ENCODE measurements at regions of chr2 and their contacts with region 1.

Region 1: GRCh38 chr2:228657807-228658402 is 476.4 kb upstream of the SPHKAP start:
- DNase-seq: no peak
- H3K4me3 ChIP-seq: no peak overlapping the region
- H3K27ac ChIP-seq: no peak overlapping the region
- H3K4me1 ChIP-seq: no peaks in the 10 kb centered on the region
- H3K27me3 ChIP-seq: no peaks in the 10 kb centered on the region
- CTCF ChIP-seq: peak; percentile 41

Region 2: DNA sequence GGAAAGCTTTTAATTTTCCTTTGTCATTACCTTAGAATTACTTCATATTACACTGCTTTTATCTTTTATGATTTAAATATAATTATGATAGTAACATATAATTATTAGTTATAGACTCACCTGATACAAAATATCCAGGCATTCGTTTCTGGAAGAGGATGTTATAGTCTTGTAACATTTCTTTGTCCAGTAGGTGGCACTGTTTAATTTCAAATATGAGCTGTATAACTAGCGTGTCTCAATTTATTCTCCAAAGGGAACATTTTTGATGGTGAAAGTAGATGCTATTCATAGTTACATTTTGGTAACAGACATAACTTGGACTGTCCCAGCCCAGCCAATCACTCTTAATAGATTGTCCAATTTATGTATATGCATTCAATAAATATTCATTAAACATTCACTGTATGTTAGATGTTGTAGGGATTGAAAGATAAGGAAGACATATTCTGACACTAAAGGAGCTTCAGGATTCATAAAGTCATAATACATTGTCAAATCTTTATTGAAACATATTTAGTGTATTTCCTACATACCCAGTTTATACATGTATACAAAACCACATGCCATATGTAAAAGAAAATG is 767.3 kb before region 1 on chr2:
- intact Hi-C with region 1: loop called (anchors 5 kb)
- DNase-seq: no peak
- H3K4me3 ChIP-seq: no peak overlapping the region
- H3K27ac ChIP-seq: no peak overlapping the region
- H3K4me1 ChIP-seq: no peaks in the 10 kb centered on the region
- H3K27me3 ChIP-seq: no peaks in the 10 kb centered on the region
- CTCF ChIP-seq: peak; percentile 65

Region 3: DNA sequence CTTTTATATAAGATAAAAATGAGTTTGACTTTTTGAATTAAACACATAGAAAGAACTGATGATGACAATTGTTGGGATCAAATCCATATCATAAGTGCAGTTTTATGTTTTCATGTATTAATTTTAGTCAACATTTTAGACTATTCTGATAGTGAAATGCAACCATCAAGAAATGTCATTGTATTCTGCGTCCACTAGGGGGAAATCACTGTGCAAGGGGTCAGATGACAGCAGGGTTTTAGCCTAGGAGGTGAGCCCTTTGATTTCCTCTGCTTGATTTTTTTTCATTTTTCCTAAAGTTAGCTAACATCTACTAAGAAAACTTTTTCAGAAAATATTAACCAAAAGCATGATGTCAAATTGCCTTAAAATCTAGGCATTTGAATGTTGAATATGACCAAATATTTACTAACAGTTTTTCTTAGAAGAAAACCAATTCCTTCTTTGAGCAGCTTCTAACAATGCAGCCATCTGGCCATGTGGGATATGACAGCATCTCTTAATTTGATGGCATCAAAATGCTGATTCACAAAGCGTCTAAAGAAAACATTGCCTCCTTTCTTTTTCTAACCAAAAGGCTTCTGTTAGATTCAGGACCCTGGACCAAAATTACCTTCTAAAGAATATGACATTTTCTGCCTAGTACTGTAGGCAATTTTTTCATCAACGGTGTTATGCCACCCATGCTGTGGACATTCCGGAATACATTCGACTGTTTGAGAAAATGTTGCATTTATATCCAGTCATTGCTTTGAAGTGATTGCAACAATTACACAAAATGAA is 618.0 kb before region 1 on chr2:
- intact Hi-C with region 1: loop called (anchors 5 kb)
- DNase-seq: no peak
- H3K4me3 ChIP-seq: no peak overlapping the region
- H3K27ac ChIP-seq: no peak overlapping the region
- H3K4me1 ChIP-seq: no peaks in the 10 kb centered on the region
- H3K27me3 ChIP-seq: no peaks in the 10 kb centered on the region
- CTCF ChIP-seq: peak; percentile 50

Region 4: DNA sequence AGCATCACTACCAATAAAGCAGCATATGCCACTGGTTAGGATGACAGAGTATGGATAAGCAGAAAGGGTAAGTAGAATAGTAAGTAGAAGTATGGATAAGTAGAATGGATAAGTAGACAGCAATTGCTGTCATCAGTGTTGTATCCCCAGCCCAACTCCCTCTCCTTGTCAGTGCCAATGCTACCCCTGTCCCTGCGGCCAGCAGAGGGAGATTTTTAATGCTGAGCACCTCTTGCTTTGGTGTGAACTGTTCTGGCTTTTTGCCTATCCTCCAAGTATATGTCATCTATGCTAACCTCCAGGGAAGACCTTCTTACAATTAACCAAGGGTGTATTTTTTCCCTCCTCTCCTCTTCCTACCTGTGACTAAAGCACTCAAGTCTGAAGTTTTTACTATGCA is 339.7 kb before region 1 on chr2:
- intact Hi-C with region 1: loop called (anchors 5 kb)
- DNase-seq: peak; percentile 31
- H3K4me3 ChIP-seq: no peak overlapping the region
- H3K27ac ChIP-seq: no peak overlapping the region
- H3K4me1 ChIP-seq: no peaks in the 10 kb centered on the region
- H3K27me3 ChIP-seq: no peaks in the 10 kb centered on the region
- CTCF ChIP-seq: peak; percentile 37

Region 5: DNA sequence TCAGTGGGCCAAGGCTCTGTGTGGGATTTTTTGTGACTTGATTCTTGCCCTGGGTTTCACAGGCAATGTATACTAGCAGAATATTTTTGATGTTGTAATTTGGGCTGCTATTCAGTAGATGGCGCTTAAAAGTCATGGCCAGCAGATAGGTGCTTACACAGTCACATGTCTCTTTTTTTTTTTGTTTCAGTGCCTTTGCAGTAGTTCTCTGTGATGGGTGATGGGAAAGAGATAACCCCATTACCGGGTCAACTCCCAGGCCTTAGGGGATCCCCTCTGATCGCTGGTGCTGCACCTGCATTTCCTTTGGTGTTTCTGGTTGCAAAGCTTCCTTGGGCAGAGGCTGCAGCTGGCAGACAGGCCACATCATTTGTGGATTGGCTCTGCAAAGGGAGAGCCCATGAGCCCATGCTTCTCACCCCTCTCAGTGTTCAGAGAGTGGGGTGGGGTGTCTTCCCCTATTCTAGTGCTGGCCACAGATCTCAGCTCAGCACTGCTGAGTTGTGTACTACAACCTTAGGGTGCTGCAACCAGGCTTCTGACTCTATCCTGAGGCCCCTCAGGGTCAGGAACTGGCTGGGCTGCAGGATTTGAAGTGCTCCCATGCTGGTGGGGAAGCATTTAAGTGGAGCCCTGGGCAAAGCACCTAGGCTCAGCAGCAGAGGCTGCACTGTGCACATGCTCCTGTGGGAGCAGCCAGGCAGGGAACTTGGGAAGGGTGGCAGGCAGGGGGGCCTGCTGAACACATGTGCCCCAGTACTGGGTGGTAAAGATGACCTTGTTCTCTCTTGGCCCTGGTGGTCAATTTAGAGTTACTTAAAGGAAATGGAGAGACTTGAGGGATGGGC is 256.6 kb before region 1 on chr2:
- intact Hi-C with region 1: loop called (anchors 5 kb)
- DNase-seq: no peak
- H3K4me3 ChIP-seq: no peak overlapping the region
- H3K27ac ChIP-seq: no peak overlapping the region
- H3K4me1 ChIP-seq: no peaks in the 10 kb centered on the region
- H3K27me3 ChIP-seq: no peaks in the 10 kb centered on the region
- CTCF ChIP-seq: no peak

Region 6: DNA sequence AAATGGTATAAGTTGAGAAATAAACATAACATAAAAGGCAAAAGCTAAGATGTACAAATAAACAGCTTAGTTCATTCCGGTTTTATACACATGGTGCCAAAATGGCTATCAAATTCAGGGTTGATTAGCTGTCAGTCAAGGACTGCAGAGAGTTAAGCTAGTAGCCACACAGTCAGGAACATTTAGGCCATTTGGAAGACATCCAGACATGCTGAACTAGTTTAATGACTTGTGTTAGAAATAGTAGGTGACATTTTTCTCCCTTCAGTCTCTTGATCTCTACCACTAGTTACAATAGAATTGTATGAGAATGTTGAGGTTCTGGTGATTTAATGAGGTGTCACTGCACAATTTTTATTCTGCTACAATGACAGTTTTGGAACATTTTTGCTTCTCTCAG is 82.0 kb before region 1 on chr2:
- intact Hi-C with region 1: no loop called
- DNase-seq: no peak
- H3K4me3 ChIP-seq: no peak overlapping the region
- H3K27ac ChIP-seq: no peak overlapping the region
- H3K4me1 ChIP-seq: no peaks in the 10 kb centered on the region
- H3K27me3 ChIP-seq: no peaks in the 10 kb centered on the region
- CTCF ChIP-seq: no peak

Measured in colonic mucosa (tissue), 4 donors.